Activated CD4-positive, alpha-beta memory T cell treated with anti-CD3 and anti-CD28 coated beads, Interleukin-2, amount 10 ng/mL, durations not matched to agents 7 days and 5 days (primary cell): ENCODE measurements at regions of chr17 and their contacts with region 1.

Region 1: DNA sequence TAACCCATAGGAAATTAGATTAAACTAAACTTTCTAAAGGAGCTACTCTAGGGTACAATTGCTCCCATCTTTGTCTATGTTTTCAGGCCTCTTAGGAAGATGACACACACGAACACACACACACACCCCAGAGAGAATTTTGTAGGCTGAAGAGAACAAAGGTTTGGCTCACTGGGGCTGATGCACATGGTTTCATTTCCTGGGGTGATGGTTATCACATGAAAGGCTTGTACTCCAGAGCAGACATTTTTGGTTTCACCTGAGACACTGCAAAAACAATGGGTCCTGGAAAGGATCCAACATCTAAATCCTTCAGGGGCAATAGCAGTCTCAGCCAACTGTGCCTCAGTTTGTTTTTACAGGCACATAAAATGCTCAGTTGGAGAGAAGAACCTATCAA is 62.8 kb downstream of the GRB7 start:
- DNase-seq: peak; percentile 55
- H3K4me3 Mint-ChIP-seq: no peak overlapping the region
- H3K27ac Mint-ChIP-seq: peak overlapping the region; percentile 83
- H3K4me1 Mint-ChIP-seq: peaks cover 36% of the 10 kb centered on the region
- H3K27me3 Mint-ChIP-seq: no peaks in the 10 kb centered on the region

Region 2: DNA sequence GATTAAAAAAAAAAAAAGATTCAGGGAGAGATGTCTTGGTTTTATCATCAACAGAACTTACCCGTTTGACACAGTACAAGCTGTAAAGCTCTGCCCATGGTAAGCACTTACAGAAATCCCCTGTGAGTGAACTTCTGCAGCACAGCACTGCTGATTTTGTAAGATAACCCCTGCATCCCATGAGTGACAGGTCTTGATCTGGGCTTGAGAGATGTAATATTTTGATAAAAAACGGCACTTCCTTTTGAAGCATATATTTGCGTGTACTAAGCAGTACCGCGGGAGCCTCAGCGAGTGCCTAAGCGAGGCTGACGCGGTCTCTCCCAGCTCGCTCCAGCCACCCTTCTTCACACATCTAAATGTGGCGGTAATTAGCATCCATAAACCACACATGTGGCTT is 13.1 kb after region 1 on chr17:
- CTCF ChIA-PET with region 1: interaction called, 16 read pairs
- POLR2A ChIA-PET with region 1: interaction called, 50 read pairs
- DNase-seq: peak; percentile 62
- H3K4me3 Mint-ChIP-seq: peak overlapping the region; percentile 59
- H3K27ac Mint-ChIP-seq: peak overlapping the region; percentile 67
- H3K4me1 Mint-ChIP-seq: peaks cover 69% of the 10 kb centered on the region
- H3K27me3 Mint-ChIP-seq: no peaks in the 10 kb centered on the region